ENCODE measurements at regions of chr2 and their contacts with region 1.

Region 1: GRCh38 chr2:39124000-39124745 is 3.3 kb upstream of the SOS1 start:
- DNase-seq: peak; percentile 91 to 96
- H3K4me3 ChIP-seq: peak overlapping the region; percentile 83 to 89
- H3K27ac ChIP-seq: peak overlapping the region; percentile 92
- H3K4me1 ChIP-seq: peaks cover 32% of the 10 kb centered on the region
- H3K27me3 ChIP-seq: no peaks in the 10 kb centered on the region
- CTCF ChIP-seq: peak in 2 of 3 experiments; percentile 6 to 27
- POLR2A ChIP-seq: peak in 1 of 2 donors; percentile 65

Region 2: DNA sequence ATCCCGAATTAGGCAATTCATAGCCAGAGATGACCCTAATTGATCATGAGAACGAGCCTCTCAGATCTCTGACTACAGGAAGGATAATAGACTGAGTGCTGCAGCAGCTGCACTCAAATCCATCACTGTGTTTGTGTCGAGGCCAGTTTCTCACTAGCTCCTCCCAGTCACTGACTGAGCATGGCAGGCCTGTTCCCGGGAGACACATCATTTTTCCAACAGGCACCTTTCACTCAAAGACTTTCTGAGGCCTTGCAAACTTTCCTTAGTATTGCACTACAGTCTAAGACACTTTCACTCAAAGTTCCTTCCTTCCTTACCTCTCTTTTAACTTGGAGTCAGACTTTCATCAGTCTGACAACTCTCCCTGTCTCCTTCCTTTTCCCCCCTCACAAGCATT is 17.0 kb before region 1 on chr2:
- intact Hi-C with region 1: loop called (anchors 1 kb)
- DNase-seq: no peak
- H3K4me3 ChIP-seq: no peak overlapping the region
- H3K27ac ChIP-seq: no peak overlapping the region
- H3K4me1 ChIP-seq: peaks cover 36% of the 10 kb centered on the region
- H3K27me3 ChIP-seq: no peaks in the 10 kb centered on the region
- CTCF ChIP-seq: no peak
- POLR2A ChIP-seq: no peak

Region 3: GRCh38 chr2:39227628-39228412 is 103.6 kb after region 1 on chr2:
- intact Hi-C with region 1: loop called (anchors 5 kb)
- DNase-seq: no peak
- H3K4me3 ChIP-seq: no peak overlapping the region
- H3K27ac ChIP-seq: no peak overlapping the region
- H3K4me1 ChIP-seq: peaks cover 4% of the 10 kb centered on the region
- H3K27me3 ChIP-seq: no peaks in the 10 kb centered on the region
- CTCF ChIP-seq: peak; percentile 43 to 94 (median 81)
- POLR2A ChIP-seq: no peak

Measured in vagina (tissue), 2 donors.